Adrenal gland (tissue), 19 donors: ENCODE measurements at regions of chr2 and their contacts with region 1.

Region 1: GRCh38 chr2:46893269-46893945 is 22.2 kb downstream of the MCFD2 start:
- DNase-seq: no peak
- H3K4me3 ChIP-seq: no peak overlapping the region
- H3K27ac ChIP-seq: no peak overlapping the region
- H3K4me1 ChIP-seq: no peaks in the 10 kb centered on the region
- H3K27me3 ChIP-seq: no peaks in the 10 kb centered on the region
- CTCF ChIP-seq: no peak
- POLR2A ChIP-seq: no peak

Region 2: DNA sequence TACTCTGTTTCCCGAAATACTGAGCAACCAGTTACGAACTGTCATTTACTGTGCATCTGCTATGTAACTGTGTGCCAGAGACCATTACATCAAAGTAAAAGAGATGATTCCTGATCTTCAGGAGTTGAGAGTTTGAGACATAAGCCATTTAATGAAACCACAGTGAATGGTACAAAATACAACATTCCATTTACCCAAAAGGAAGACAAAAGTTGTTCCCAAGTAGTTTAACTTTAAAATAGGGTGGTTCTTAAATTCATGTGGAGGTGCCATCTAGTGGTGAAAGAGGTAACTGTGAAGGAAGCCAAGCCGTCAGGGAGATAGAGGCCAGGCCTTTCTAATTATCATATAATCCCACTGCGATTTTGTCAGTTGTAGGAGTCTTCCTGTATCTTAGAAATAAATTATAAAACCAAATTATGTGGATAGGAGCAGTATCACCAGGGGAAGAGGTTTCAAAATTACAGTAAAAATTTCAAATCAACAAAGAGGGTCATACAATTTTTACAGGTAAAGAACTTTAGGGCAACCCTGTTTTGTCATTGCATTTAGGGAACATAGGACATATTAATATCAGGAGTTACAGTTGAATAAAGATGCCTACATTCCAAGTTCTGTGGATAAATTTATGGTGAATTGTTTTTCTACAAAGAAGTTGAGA is 528.5 kb before region 1 on chr2:
- intact Hi-C with region 1: no loop called
- DNase-seq: peak in 5 of 7 donors; percentile 28 to 73 (median 58)
- H3K4me3 ChIP-seq: no peak overlapping the region
- H3K27ac ChIP-seq: no peak overlapping the region
- H3K4me1 ChIP-seq: no peaks in the 10 kb centered on the region
- H3K27me3 ChIP-seq: no peaks in the 10 kb centered on the region
- CTCF ChIP-seq: peak; percentile 68 to 86 (median 80)
- POLR2A ChIP-seq: no peak

Region 3: DNA sequence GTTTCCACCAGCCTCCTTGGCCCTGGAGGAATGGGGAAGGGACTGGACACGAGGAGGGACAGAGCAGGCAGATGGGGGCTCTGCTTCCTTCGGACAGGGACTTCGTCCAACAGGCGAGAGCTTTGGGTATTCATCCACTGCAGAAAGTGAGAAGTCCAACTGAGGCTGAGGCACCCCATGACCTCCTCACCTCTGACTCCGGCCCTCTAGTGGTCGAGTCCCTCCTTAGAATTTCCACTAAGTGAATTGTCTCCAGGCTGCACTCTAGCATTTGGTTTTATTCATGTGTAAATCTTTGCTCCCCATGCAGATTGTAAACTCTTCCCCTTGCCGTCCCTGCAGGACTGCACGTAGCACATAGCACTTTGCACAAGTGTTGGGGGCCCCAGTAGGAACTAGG is 338.4 kb before region 1 on chr2:
- intact Hi-C with region 1: loop called in 1 of 2 experiments (anchors 10 kb)
- DNase-seq: no peak
- H3K4me3 ChIP-seq: no peak overlapping the region
- H3K27ac ChIP-seq: peak overlapping the region in 3 of 5 donors; percentile 1 to 70 (median 9)
- H3K4me1 ChIP-seq: peaks cover 0 to 23% of the 10 kb centered on the region in 2 donors
- H3K27me3 ChIP-seq: no peaks in the 10 kb centered on the region
- CTCF ChIP-seq: peak in 3 of 6 experiments; percentile 13 to 25 (median 23)
- POLR2A ChIP-seq: no peak

Region 4: GRCh38 chr2:46632349-46632748 is 261.1 kb before region 1 on chr2:
- intact Hi-C with region 1: loop called in 1 of 2 experiments (anchors 5 kb)
- DNase-seq: no peak
- H3K4me3 ChIP-seq: no peak overlapping the region
- H3K27ac ChIP-seq: no peak overlapping the region
- H3K4me1 ChIP-seq: no peaks in the 10 kb centered on the region
- H3K27me3 ChIP-seq: no peaks in the 10 kb centered on the region
- CTCF ChIP-seq: peak; percentile 34 to 82 (median 63)
- POLR2A ChIP-seq: no peak

Region 5: GRCh38 chr2:46722142-46722541 is 171.3 kb before region 1 on chr2:
- intact Hi-C with region 1: no loop called
- DNase-seq: no peak
- H3K4me3 ChIP-seq: no peak overlapping the region
- H3K27ac ChIP-seq: no peak overlapping the region
- H3K4me1 ChIP-seq: peaks cover 14 to 80% of the 10 kb centered on the region in 2 donors
- H3K27me3 ChIP-seq: no peaks in the 10 kb centered on the region
- CTCF ChIP-seq: no peak
- POLR2A ChIP-seq: no peak

Region 6: DNA sequence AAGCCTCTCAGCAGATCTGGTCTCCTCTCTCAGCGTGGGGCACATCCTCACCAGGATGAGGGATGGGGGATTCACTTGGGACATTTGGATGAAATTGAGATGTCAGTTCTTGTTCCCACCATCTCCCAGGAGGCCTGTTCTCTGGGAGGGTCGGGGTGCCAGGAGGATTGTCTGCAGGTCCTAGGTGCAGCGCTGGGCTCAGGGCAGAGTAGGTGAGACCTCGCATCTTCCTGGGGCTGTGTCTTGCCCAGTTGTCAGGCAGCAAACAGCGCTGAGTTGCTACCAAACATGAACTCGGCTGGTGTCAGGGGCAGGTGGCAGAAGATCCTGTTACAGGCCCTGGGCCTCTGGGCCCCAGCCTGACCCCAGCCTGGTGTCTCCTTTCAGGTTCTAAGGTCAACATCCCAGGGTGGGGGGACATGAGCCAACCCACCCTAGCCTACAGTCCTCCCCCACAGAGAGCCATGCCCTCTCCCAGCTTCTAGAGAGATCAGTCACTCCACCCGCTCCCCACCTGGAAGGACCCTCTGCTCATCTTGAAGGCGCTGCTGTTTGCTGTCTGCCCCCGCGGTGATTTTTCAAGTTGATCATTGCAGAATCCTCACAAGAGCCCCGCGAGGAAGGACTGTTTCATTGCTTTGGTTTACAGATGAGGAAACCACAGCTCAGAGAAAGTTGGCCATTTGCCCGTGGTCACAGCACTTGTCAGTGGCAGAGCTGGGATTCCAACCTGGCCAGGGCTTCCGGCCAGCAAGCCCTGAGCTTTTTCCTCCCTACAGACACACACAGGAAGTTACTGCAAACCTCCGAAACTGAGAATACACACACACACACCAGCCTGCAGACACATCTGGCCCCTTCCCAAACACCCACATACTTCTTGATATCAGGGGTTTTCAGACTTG is 177.8 kb after region 1 on chr2:
- intact Hi-C with region 1: no loop called
- DNase-seq: peak; percentile 70 to 93 (median 85)
- H3K4me3 ChIP-seq: no peak overlapping the region
- H3K27ac ChIP-seq: peak overlapping the region; percentile 28 to 89 (median 76)
- H3K4me1 ChIP-seq: peaks cover 34 to 91% of the 10 kb centered on the region in 2 donors
- H3K27me3 ChIP-seq: no peaks in the 10 kb centered on the region
- CTCF ChIP-seq: no peak
- POLR2A ChIP-seq: no peak